MCF 10A (cell line): ENCODE measurements at regions of chr13 and their contacts with region 1.

Region 1: GRCh38 chr13:40666045-40666904 is at the start of gene FOXO1:
- DNase-seq: peak; percentile 79
- H3K4me3 Mint-ChIP-seq: peak within 1 kb of the TSS; percentile 90
- H3K27ac Mint-ChIP-seq: peak within 1 kb of the TSS; percentile 79
- H3K4me1 Mint-ChIP-seq: peaks cover 12% of the 10 kb centered on the region
- H3K27me3 Mint-ChIP-seq: no peaks in the 10 kb centered on the region
- CTCF ChIP-seq: no peak
- total RNA-seq, gene FOXO1: 37.1 and 37.7 TPM in 2 replicates

Region 2: GRCh38 chr13:39777527-39778061 is 888.7 kb before region 1 on chr13:
- CTCF ChIA-PET with region 1: no interaction called
- POLR2A ChIA-PET with region 1: interaction called, 5 read pairs
- intact Hi-C with region 1: loop called (anchors 5 kb)
- DNase-seq: peak; percentile 90
- H3K4me3 Mint-ChIP-seq: no peak overlapping the region
- H3K27ac Mint-ChIP-seq: peak overlapping the region; percentile 31
- H3K4me1 Mint-ChIP-seq: peaks cover 10% of the 10 kb centered on the region
- H3K27me3 Mint-ChIP-seq: no peaks in the 10 kb centered on the region
- CTCF ChIP-seq: peak; percentile 23

Region 3: GRCh38 chr13:40069173-40070044 is 596.9 kb before region 1 on chr13:
- CTCF ChIA-PET with region 1: interaction called, 4 read pairs
- POLR2A ChIA-PET with region 1: no interaction called
- intact Hi-C with region 1: loop called (anchors 2 kb)
- DNase-seq: peak; percentile 83
- H3K4me3 Mint-ChIP-seq: no peak overlapping the region
- H3K27ac Mint-ChIP-seq: peak overlapping the region; percentile 42
- H3K4me1 Mint-ChIP-seq: peaks cover 14% of the 10 kb centered on the region
- H3K27me3 Mint-ChIP-seq: no peaks in the 10 kb centered on the region
- CTCF ChIP-seq: peak; percentile 72

Region 4: DNA sequence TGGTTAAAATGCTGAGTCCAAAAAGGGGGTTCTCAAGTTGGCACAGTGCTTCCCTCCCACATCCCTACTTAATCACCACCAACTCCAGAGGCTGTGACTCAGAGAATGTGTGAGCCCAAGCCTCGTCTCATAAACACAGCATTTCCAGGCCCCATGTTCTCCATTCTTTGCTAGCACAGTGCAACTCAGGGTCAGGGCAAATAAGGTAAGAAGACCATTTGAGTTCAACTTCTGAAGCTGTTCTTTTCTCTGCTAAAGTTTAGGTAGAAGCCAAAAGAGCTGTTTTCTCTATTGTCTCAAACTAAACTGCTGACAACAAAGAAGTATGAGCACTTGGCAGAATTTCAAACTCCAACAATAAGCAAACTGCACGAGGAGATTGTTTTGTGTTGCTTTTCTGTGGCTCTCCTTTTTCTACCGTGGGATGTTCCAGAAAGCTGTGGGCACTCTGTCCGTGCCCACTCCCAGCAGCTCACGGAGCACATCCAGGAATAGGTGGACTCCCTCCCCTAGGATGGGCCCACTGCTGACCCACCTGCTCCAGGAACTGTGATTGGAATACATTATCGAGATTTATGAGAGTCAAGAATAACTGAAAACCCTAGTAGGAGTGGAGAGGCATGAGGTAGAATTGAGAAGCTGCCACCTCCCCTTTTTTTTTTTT is 516.5 kb before region 1 on chr13:
- CTCF ChIA-PET with region 1: interaction called, 3 read pairs
- POLR2A ChIA-PET with region 1: interaction called, 3 read pairs
- intact Hi-C with region 1: loop called (anchors 2 kb)
- DNase-seq: peak; percentile 90
- H3K4me3 Mint-ChIP-seq: no peak overlapping the region
- H3K27ac Mint-ChIP-seq: peak overlapping the region; percentile 94
- H3K4me1 Mint-ChIP-seq: peaks cover 50% of the 10 kb centered on the region
- H3K27me3 Mint-ChIP-seq: no peaks in the 10 kb centered on the region
- CTCF ChIP-seq: no peak

Region 5: GRCh38 chr13:40344270-40345148 is 321.8 kb before region 1 on chr13:
- CTCF ChIA-PET with region 1: no interaction called
- POLR2A ChIA-PET with region 1: no interaction called
- intact Hi-C with region 1: loop called (anchors 10 kb)
- DNase-seq: no peak
- H3K4me3 Mint-ChIP-seq: no peak overlapping the region
- H3K27ac Mint-ChIP-seq: no peak overlapping the region
- H3K4me1 Mint-ChIP-seq: peaks cover 29% of the 10 kb centered on the region
- H3K27me3 Mint-ChIP-seq: no peaks in the 10 kb centered on the region
- CTCF ChIP-seq: no peak

Region 6: GRCh38 chr13:40549500-40550094 is 116.7 kb before region 1 on chr13:
- CTCF ChIA-PET with region 1: no interaction called
- POLR2A ChIA-PET with region 1: no interaction called
- intact Hi-C with region 1: loop called (anchors 5 kb)
- DNase-seq: no peak
- H3K4me3 Mint-ChIP-seq: no peak overlapping the region
- H3K27ac Mint-ChIP-seq: peak overlapping the region; percentile 25
- H3K4me1 Mint-ChIP-seq: peaks cover 20% of the 10 kb centered on the region
- H3K27me3 Mint-ChIP-seq: no peaks in the 10 kb centered on the region
- CTCF ChIP-seq: no peak

Region 7: DNA sequence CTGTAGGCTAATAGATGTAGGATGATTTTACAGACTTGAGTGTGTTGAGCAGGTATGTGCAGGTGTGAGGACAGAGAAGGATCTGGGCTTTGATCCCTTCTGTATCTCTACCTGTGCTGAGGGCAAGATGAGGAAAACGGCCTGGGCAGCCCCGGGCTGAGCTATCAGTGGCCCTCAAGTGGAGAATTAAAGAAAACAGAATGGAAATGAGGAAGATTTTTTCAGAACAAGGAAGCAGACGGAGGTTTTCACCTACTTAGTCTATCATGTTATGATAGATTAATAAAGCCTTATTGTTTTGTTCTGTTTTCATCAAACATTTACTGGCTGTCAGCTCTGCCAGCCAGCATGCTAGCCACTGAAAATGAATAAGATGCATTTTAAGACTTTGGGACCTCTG is 22.5 kb after region 1 on chr13:
- CTCF ChIA-PET with region 1: no interaction called
- POLR2A ChIA-PET with region 1: no interaction called
- intact Hi-C with region 1: no loop called
- DNase-seq: no peak
- H3K4me3 Mint-ChIP-seq: no peak overlapping the region
- H3K27ac Mint-ChIP-seq: no peak overlapping the region
- H3K4me1 Mint-ChIP-seq: no peaks in the 10 kb centered on the region
- H3K27me3 Mint-ChIP-seq: no peaks in the 10 kb centered on the region
- CTCF ChIP-seq: no peak

Region 8: GRCh38 chr13:41678249-41678648 is 1012.0 kb after region 1 on chr13:
- CTCF ChIA-PET with region 1: no interaction called
- POLR2A ChIA-PET with region 1: no interaction called
- intact Hi-C with region 1: no loop called
- DNase-seq: no peak
- H3K4me3 Mint-ChIP-seq: no peak overlapping the region
- H3K27ac Mint-ChIP-seq: no peak overlapping the region
- H3K4me1 Mint-ChIP-seq: no peaks in the 10 kb centered on the region
- H3K27me3 Mint-ChIP-seq: no peaks in the 10 kb centered on the region
- CTCF ChIP-seq: no peak